ENCODE measurements at regions of chr5 and their contacts with region 1.

Region 1: DNA sequence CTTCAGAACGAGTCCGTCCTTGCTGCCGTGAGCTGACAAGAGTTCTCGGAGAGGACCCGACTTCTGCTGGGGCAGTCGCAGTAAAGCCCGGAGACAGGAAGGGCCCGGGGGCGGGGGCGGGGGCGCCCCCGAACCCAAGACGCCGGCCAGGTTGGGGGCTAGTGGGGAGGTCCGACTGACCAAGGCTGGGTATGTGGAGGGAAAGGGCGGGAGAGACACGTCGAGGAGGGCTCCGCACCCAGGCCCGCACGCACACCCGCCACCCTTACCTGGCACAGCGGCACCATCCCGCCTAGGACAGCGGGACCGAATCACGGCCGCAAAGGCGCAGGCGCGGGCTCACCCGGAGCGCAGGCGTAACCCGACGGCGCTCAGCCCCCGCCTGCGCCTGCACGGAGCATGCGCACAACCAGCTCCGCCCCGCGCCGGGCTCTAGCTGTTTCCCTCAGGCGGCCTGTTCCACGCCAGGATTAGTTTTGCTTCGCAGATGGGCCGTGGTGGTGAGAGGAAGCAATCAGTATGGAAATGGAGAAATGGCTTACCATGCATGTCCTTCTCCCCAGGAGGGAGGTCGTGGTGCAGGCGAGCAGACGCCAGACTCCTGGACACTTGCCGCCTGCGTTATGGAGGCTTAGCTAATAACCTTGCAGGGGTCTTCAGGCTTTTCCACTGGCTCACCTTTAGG is at the start of gene MOCS2:
- DNase-seq: peak; percentile 87 to 93 (median 91)
- ATAC-seq: peak; percentile 98
- H3K4me3 ChIP-seq: peak within 1 kb of the TSS; percentile 88
- H3K4me3 Mint-ChIP-seq: peak within 1 kb of the TSS; percentile 93 to 99 (median 96)
- H3K27ac ChIP-seq: peak within 1 kb of the TSS; percentile 84
- H3K27ac Mint-ChIP-seq: peak within 1 kb of the TSS; percentile 86 to 98 (median 93)
- H3K4me1 ChIP-seq: peaks cover 6 to 7% of the 10 kb centered on the region in 2 donors
- H3K4me1 Mint-ChIP-seq: peaks cover 29 to 64% (median 60%) of the 10 kb centered on the region in 7 donors
- H3K27me3 ChIP-seq: no peaks in the 10 kb centered on the region
- H3K27me3 Mint-ChIP-seq: no peaks in the 10 kb centered on the region
- total RNA-seq, gene MOCS2: 12.8 to 29.8 (median 20.9) TPM

Region 2: GRCh38 chr5:53089345-53089991 is 20.1 kb before region 1 on chr5:
- CTCF ChIA-PET with region 1: interaction called, 6 read pairs
- POLR2A ChIA-PET with region 1: interaction called, 6 read pairs
- intact Hi-C with region 1: loop called (anchors 2 kb)
- DNase-seq: peak in 6 of 9 donors; percentile 29 to 60 (median 40)
- ATAC-seq: peak; percentile 65
- H3K4me3 ChIP-seq: no peak overlapping the region
- H3K4me3 Mint-ChIP-seq: peak overlapping the region in 7 of 10 donors; percentile 32 to 71 (median 47)
- H3K27ac ChIP-seq: no peak overlapping the region
- H3K27ac Mint-ChIP-seq: peak overlapping the region in 5 of 9 donors; percentile 25 to 76 (median 40)
- H3K4me1 ChIP-seq: peaks cover 0 to 16% of the 10 kb centered on the region in 2 donors
- H3K4me1 Mint-ChIP-seq: peaks cover 11 to 61% (median 19%) of the 10 kb centered on the region in 7 donors
- H3K27me3 ChIP-seq: no peaks in the 10 kb centered on the region
- H3K27me3 Mint-ChIP-seq: peaks cover 0 to 2% (median 0%) of the 10 kb centered on the region in 5 donors

Region 3: GRCh38 chr5:54229041-54229780 is 1119.6 kb after region 1 on chr5:
- CTCF ChIA-PET with region 1: no interaction called
- POLR2A ChIA-PET with region 1: no interaction called
- intact Hi-C with region 1: loop called in 1 of 2 experiments (anchors 5 kb)
- DNase-seq: peak; percentile 32 to 70 (median 62)
- ATAC-seq: peak; percentile 89
- H3K4me3 ChIP-seq: no peak overlapping the region
- H3K4me3 Mint-ChIP-seq: peak overlapping the region in 1 of 10 donors; percentile 14
- H3K27ac ChIP-seq: no peak overlapping the region
- H3K27ac Mint-ChIP-seq: peak overlapping the region in 1 of 9 donors; percentile 10
- H3K4me1 ChIP-seq: peaks cover 0 to 4% of the 10 kb centered on the region in 2 donors
- H3K4me1 Mint-ChIP-seq: peaks cover 3 to 39% (median 18%) of the 10 kb centered on the region in 7 donors
- H3K27me3 ChIP-seq: no peaks in the 10 kb centered on the region
- H3K27me3 Mint-ChIP-seq: peaks cover 0 to 8% (median 0%) of the 10 kb centered on the region in 5 donors

Region 4: GRCh38 chr5:54480296-54480695 is 1370.7 kb after region 1 on chr5:
- CTCF ChIA-PET with region 1: no interaction called
- POLR2A ChIA-PET with region 1: no interaction called
- intact Hi-C with region 1: loop called in 1 of 2 experiments (anchors 5 kb)
- DNase-seq: no peak
- ATAC-seq: peak; percentile 27
- H3K4me3 ChIP-seq: no peak overlapping the region
- H3K4me3 Mint-ChIP-seq: no peak overlapping the region
- H3K27ac ChIP-seq: no peak overlapping the region
- H3K27ac Mint-ChIP-seq: no peak overlapping the region
- H3K4me1 ChIP-seq: no peaks in the 10 kb centered on the region
- H3K4me1 Mint-ChIP-seq: peaks cover 0 to 3% (median 0%) of the 10 kb centered on the region in 7 donors
- H3K27me3 ChIP-seq: no peaks in the 10 kb centered on the region
- H3K27me3 Mint-ChIP-seq: peaks cover 5 to 19% (median 14%) of the 10 kb centered on the region in 5 donors

Measured in naive thymus-derived CD4-positive, alpha-beta T cell (primary cell).